Spleen (tissue), 13 donors: ENCODE measurements at regions of chr1 and their contacts with region 1.

Region 1: GRCh38 chr1:67749844-67750689 is 65.1 kb downstream of the GADD45A start:
- DNase-seq: no peak
- H3K4me3 ChIP-seq: no peak overlapping the region
- H3K27ac ChIP-seq: peak overlapping the region in 6 of 8 donors; percentile 22 to 69 (median 46)
- H3K4me1 ChIP-seq: peaks cover 5 to 58% (median 30%) of the 10 kb centered on the region in 6 donors
- H3K27me3 ChIP-seq: no peaks in the 10 kb centered on the region
- CTCF ChIP-seq: no peak
- POLR2A ChIP-seq: no peak

Region 2: DNA sequence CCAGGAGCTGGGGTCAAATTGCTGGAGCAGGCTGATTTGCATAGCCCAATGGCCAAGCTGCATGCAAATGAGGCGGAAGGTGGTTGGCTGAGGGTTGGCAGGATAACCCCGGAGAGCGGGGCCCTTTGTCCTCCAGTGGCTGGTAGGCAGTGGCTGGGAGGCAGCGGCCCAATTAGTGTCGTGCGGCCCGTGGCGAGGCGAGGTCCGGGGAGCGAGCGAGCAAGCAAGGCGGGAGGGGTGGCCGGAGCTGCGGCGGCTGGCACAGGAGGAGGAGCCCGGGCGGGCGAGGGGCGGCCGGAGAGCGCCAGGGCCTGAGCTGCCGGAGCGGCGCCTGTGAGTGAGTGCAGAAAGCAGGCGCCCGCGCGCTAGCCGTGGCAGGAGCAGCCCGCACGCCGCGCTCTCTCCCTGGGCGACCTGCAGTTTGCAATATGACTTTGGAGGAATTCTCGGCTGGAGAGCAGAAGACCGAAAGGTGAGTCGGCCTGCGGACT is 65.0 kb before region 1 on chr1 and contains the start of gene GADD45A:
- intact Hi-C with region 1: loop called (anchors 10 kb)
- DNase-seq: peak; percentile 100
- H3K4me3 ChIP-seq: peak within 1 kb of the TSS; percentile 76 to 97 (median 93)
- H3K27ac ChIP-seq: peak within 1 kb of the TSS; percentile 79 to 97 (median 94)
- H3K4me1 ChIP-seq: peaks cover 7 to 60% (median 42%) of the 10 kb centered on the region in 6 donors
- H3K27me3 ChIP-seq: no peaks in the 10 kb centered on the region
- CTCF ChIP-seq: peak in 2 of 11 experiments; percentile 19 to 42
- POLR2A ChIP-seq: peak; percentile 88 to 99 (median 91)
- total RNA-seq, gene GADD45A: 19.7 to 63.7 (median 31.7) TPM